B cell (primary cell): ENCODE measurements at regions of chr12 and their contacts with region 1.

Region 1: DNA sequence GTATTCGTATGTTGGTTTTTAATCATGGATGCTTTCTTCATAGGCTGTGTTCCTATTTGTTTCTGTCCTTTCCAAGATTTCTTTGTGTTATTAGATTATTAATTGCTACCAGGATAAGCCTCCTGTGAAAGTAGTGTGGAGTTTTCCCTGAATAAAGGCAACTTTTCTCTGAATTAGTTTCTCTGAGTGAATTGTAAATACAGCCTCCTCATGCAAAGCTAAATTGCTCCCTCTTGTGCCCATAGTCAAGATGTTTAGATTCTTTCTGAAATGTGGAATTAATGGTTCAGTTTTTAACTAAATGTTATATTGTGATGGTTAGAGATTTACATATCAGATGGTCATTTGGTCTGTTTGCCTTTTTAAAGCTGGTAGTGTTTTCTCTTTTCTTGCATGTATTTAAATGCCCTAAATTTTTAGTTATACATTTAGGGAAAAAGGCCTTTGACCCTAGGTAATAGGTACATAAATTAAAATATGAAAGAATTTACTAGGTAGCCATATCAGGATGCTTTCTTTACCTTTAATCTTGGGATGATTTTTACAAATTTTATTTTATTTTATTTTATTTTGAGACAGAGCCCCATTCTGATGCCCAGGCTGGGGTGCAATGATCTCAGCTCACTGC is 8.9 kb downstream of the APAF1 start:
- DNase-seq: peak; percentile 73
- ATAC-seq: peak; percentile 47
- H3K4me3 ChIP-seq: no peak overlapping the region
- H3K4me3 Mint-ChIP-seq: no peak overlapping the region
- H3K27ac ChIP-seq: no peak overlapping the region
- H3K27ac Mint-ChIP-seq: no peak overlapping the region
- H3K4me1 ChIP-seq: no peaks in the 10 kb centered on the region
- H3K4me1 Mint-ChIP-seq: peaks cover 1% of the 10 kb centered on the region
- H3K27me3 ChIP-seq: no peaks in the 10 kb centered on the region
- H3K27me3 Mint-ChIP-seq: no peaks in the 10 kb centered on the region
- CTCF ChIP-seq: peak; percentile 80

Region 2: GRCh38 chr12:98397316-98398105 is 256.5 kb before region 1 on chr12:
- CTCF ChIA-PET with region 1: no interaction called
- POLR2A ChIA-PET with region 1: no interaction called
- intact Hi-C with region 1: no loop called
- DNase-seq: peak; percentile 81
- ATAC-seq: peak; percentile 92
- H3K4me3 ChIP-seq: peak overlapping the region; percentile 35 to 65 (median 49)
- H3K4me3 Mint-ChIP-seq: peak overlapping the region; percentile 84
- H3K27ac ChIP-seq: peak overlapping the region in 1 of 2 donors; percentile 32
- H3K27ac Mint-ChIP-seq: no peak overlapping the region
- H3K4me1 ChIP-seq: peaks cover 13 to 18% of the 10 kb centered on the region in 2 donors
- H3K4me1 Mint-ChIP-seq: peaks cover 27% of the 10 kb centered on the region
- H3K27me3 ChIP-seq: no peaks in the 10 kb centered on the region
- H3K27me3 Mint-ChIP-seq: no peaks in the 10 kb centered on the region
- CTCF ChIP-seq: peak; percentile 94

Region 3: DNA sequence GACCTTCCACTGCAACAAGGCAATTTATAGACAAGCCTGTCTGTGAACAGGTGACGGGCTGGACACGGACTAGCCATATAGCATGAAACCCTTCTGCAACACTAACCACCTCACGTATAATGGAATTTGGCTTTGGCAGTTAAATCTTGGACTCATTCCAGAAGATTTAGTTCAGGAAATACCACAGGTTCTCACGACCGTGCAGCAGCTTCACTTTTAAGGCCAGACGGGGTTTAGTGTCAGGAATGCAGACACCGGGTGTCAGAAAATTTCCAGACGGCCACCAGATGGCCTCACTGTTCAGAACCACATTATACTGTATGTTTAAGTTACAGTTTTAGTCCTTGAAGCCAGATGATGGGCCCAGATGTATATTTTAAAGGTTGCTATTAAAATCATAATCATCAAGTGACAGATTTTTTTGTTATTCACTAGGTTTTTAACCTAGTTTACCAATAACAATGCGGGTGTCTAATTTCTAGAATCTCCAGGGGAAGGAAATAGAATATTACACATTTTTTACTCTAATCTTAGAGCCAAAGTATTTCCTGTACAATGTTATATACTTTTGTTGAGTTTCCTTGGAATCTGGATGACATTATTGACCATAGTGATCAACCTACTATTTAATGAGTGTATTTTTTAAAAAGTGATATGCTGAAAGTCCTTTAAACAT is 229.1 kb before region 1 on chr12:
- CTCF ChIA-PET with region 1: interaction called, 3 read pairs
- POLR2A ChIA-PET with region 1: no interaction called
- intact Hi-C with region 1: loop called (anchors 2 kb)
- DNase-seq: peak; percentile 55
- ATAC-seq: peak; percentile 36
- H3K4me3 ChIP-seq: no peak overlapping the region
- H3K4me3 Mint-ChIP-seq: no peak overlapping the region
- H3K27ac ChIP-seq: no peak overlapping the region
- H3K27ac Mint-ChIP-seq: no peak overlapping the region
- H3K4me1 ChIP-seq: peaks cover 0 to 3% of the 10 kb centered on the region in 2 donors
- H3K4me1 Mint-ChIP-seq: no peaks in the 10 kb centered on the region
- H3K27me3 ChIP-seq: no peaks in the 10 kb centered on the region
- H3K27me3 Mint-ChIP-seq: peaks cover 3% of the 10 kb centered on the region
- CTCF ChIP-seq: peak; percentile 67

Region 4: GRCh38 chr12:98490501-98491453 is 163.2 kb before region 1 on chr12:
- CTCF ChIA-PET with region 1: interaction called, 25 read pairs
- POLR2A ChIA-PET with region 1: no interaction called
- intact Hi-C with region 1: loop called (anchors 1 kb)
- DNase-seq: peak; percentile 88
- ATAC-seq: peak; percentile 95
- H3K4me3 ChIP-seq: peak overlapping the region in 1 of 5 experiments; percentile 26
- H3K4me3 Mint-ChIP-seq: peak overlapping the region; percentile 32
- H3K27ac ChIP-seq: peak overlapping the region; percentile 0 to 14
- H3K27ac Mint-ChIP-seq: peak overlapping the region; percentile 92
- H3K4me1 ChIP-seq: peaks cover 6% of the 10 kb centered on the region in 2 donors
- H3K4me1 Mint-ChIP-seq: peaks cover 5% of the 10 kb centered on the region
- H3K27me3 ChIP-seq: no peaks in the 10 kb centered on the region
- H3K27me3 Mint-ChIP-seq: no peaks in the 10 kb centered on the region
- CTCF ChIP-seq: peak; percentile 84

Region 5: DNA sequence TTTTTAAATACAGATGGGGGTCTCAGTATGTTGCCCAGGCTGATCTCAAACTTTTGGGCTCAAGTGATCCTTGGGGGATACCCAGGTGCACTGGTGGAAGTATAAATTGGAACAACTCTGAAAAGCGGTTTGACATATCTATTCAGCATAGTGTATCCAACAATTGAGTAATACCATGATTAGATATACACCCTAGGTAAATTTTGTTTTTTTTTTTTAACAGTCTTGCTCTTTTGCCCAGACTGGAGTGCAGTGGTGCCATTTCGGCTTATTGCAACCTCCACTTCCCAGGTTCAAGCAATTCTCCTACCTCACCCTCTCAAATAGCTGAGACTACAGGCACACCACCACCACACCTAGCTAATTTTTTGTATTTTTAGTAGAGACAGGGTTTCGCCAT is 92.1 kb before region 1 on chr12:
- CTCF ChIA-PET with region 1: interaction called, 127 read pairs
- POLR2A ChIA-PET with region 1: no interaction called
- intact Hi-C with region 1: loop called (anchors 1 kb)
- DNase-seq: no peak
- ATAC-seq: no peak
- H3K4me3 ChIP-seq: no peak overlapping the region
- H3K4me3 Mint-ChIP-seq: no peak overlapping the region
- H3K27ac ChIP-seq: no peak overlapping the region
- H3K27ac Mint-ChIP-seq: no peak overlapping the region
- H3K4me1 ChIP-seq: no peaks in the 10 kb centered on the region
- H3K4me1 Mint-ChIP-seq: peaks cover 3% of the 10 kb centered on the region
- H3K27me3 ChIP-seq: no peaks in the 10 kb centered on the region
- H3K27me3 Mint-ChIP-seq: no peaks in the 10 kb centered on the region
- CTCF ChIP-seq: no peak

Region 6: GRCh38 chr12:98572010-98572409 is 82.0 kb before region 1 on chr12:
- CTCF ChIA-PET with region 1: interaction called, 127 read pairs
- POLR2A ChIA-PET with region 1: no interaction called
- intact Hi-C with region 1: no loop called
- DNase-seq: no peak
- ATAC-seq: no peak
- H3K4me3 ChIP-seq: no peak overlapping the region
- H3K4me3 Mint-ChIP-seq: no peak overlapping the region
- H3K27ac ChIP-seq: no peak overlapping the region
- H3K27ac Mint-ChIP-seq: no peak overlapping the region
- H3K4me1 ChIP-seq: no peaks in the 10 kb centered on the region
- H3K4me1 Mint-ChIP-seq: no peaks in the 10 kb centered on the region
- H3K27me3 ChIP-seq: no peaks in the 10 kb centered on the region
- H3K27me3 Mint-ChIP-seq: peaks cover 3% of the 10 kb centered on the region
- CTCF ChIP-seq: peak; percentile 12

Region 7: DNA sequence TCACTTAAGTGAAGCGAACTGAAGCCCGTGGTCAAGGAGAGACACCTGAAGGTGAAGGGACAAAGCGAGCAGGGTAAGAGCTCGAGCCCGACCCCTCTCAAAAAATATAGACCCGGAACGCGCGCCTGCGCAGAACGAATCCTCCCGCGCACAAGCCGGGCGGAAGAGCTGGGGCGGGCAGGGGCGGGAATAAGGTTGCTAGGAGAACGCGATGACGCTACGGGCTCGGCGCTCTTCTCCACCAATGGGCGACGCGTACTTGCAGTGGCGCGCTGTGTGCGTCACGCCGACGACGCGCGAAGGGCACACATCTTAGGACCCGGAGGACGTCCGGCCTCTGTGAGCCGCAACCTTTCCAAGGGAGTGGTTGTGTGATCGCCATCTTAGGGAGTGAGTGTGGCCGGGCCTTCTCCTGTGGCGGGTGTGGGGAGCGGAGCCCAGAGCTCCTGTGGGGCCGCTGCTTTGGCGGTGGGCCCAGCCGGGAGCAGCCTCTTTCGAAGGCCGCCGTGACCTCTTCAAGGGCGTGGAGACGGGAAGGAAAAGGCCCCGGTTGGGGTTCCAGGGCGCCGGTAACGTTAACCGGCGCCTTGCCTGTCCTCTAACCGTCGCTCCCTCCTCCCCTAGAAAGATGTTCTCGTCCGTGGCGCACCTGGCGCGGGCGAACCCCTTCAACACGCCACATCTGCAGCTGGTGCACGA is 60.5 kb before region 1 on chr12 and contains the start of gene SLC25A3:
- CTCF ChIA-PET with region 1: interaction called, 28 read pairs
- POLR2A ChIA-PET with region 1: no interaction called
- intact Hi-C with region 1: no loop called
- DNase-seq: peak; percentile 99
- ATAC-seq: peak; percentile 97
- H3K4me3 ChIP-seq: peak within 1 kb of the TSS; percentile 91 to 100 (median 96)
- H3K4me3 Mint-ChIP-seq: peak within 1 kb of the TSS; percentile 91
- H3K27ac ChIP-seq: peak within 1 kb of the TSS; percentile 96 to 98
- H3K27ac Mint-ChIP-seq: peak within 1 kb of the TSS; percentile 98
- H3K4me1 ChIP-seq: peaks cover 20 to 25% of the 10 kb centered on the region in 2 donors
- H3K4me1 Mint-ChIP-seq: peaks cover 34% of the 10 kb centered on the region
- H3K27me3 ChIP-seq: no peaks in the 10 kb centered on the region
- H3K27me3 Mint-ChIP-seq: no peaks in the 10 kb centered on the region
- CTCF ChIP-seq: no peak
- total RNA-seq, gene SLC25A3: 304 and 308 TPM in 2 replicates

Region 8: DNA sequence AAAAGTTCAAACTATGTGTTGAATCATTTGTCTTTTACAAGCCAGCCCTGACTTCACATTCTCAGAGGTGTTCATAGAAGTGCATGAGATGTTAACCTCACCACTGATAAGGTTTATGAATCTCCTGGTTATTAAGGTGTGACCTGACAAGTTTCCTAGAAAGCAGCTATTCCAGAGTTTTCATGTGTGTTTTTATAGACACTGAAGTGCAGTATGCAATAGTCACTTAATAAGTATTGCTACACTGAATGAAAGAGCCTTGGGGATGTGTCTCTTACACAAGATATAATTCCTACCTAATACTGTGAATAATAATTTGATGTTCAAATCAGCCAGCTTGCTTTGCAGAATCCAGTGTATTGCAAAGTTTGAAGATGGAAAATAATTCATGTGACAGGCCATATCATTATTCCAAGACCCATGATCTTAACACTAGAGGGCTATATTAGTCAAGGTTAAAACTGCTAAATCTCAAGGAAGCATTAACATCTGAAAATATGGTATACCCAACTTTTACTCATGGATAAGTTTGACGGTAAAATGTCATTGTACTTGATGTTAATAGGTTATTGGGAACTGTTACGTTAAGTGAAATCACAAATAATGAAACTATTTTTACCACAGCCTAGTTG is 47.5 kb before region 1 on chr12:
- CTCF ChIA-PET with region 1: interaction called, 36 read pairs
- POLR2A ChIA-PET with region 1: no interaction called
- intact Hi-C with region 1: loop called (anchors 1 kb)
- DNase-seq: no peak
- ATAC-seq: no peak
- H3K4me3 ChIP-seq: no peak overlapping the region
- H3K4me3 Mint-ChIP-seq: peak overlapping the region; percentile 91
- H3K27ac ChIP-seq: peak overlapping the region in 1 of 2 donors; percentile 71
- H3K27ac Mint-ChIP-seq: no peak overlapping the region
- H3K4me1 ChIP-seq: peaks cover 4 to 12% of the 10 kb centered on the region in 2 donors
- H3K4me1 Mint-ChIP-seq: peaks cover 16% of the 10 kb centered on the region
- H3K27me3 ChIP-seq: no peaks in the 10 kb centered on the region
- H3K27me3 Mint-ChIP-seq: no peaks in the 10 kb centered on the region
- CTCF ChIP-seq: no peak